CD4-positive, alpha-beta memory T cell (primary cell): ENCODE measurements at regions of chr7 and their contacts with region 1.

Region 1: GRCh38 chr7:39633563-39634477 is 10.4 kb downstream of the RALA start:
- DNase-seq: peak; percentile 43 to 73 (median 58)
- H3K4me3 ChIP-seq: peak overlapping the region in 1 of 2 donors; percentile 8
- H3K4me3 Mint-ChIP-seq: peak overlapping the region; percentile 56 to 85 (median 76)
- H3K27ac ChIP-seq: peak overlapping the region; percentile 52
- H3K27ac Mint-ChIP-seq: peak overlapping the region; percentile 90 to 99 (median 96)
- H3K4me1 ChIP-seq: peaks cover 56% of the 10 kb centered on the region
- H3K4me1 Mint-ChIP-seq: peaks cover 57 to 77% (median 66%) of the 10 kb centered on the region in 4 donors
- H3K27me3 ChIP-seq: no peaks in the 10 kb centered on the region
- H3K27me3 Mint-ChIP-seq: no peaks in the 10 kb centered on the region

Region 2: GRCh38 chr7:39650676-39651075 is 16.9 kb after region 1 on chr7:
- CTCF ChIA-PET with region 1: no interaction called
- POLR2A ChIA-PET with region 1: no interaction called
- intact Hi-C with region 1: loop called (anchors 2 kb)
- DNase-seq: no peak
- H3K4me3 ChIP-seq: no peak overlapping the region
- H3K4me3 Mint-ChIP-seq: no peak overlapping the region
- H3K27ac ChIP-seq: no peak overlapping the region
- H3K27ac Mint-ChIP-seq: no peak overlapping the region
- H3K4me1 ChIP-seq: no peaks in the 10 kb centered on the region
- H3K4me1 Mint-ChIP-seq: peaks cover 15 to 41% (median 25%) of the 10 kb centered on the region in 4 donors
- H3K27me3 ChIP-seq: no peaks in the 10 kb centered on the region
- H3K27me3 Mint-ChIP-seq: no peaks in the 10 kb centered on the region

Region 3: DNA sequence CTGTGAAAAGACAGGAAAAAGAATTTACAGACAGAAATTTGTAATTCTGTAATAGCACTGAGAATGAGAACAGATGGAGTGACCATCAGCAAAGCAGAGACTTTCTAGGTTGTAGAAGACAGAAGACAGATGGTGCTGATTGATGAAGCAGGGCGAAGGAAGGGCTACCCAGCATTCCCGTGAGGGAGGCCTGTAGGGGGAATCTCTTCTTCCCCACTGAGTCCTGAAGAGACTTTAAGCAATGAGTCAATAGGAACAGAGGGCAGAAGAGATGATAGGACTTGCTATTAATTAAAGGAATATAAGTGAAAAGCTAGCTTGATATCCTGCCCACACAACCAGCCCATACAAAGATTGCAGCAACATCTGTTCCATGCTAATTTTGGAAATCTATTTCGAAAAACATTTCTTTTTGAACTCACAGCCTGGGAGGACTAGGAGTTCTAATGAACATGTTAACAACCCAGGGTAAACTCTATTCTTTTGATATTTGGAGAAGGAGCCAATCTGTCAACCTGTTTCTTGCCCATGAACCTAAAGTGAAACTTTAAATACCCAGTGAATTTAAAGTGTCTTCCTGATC is 33.6 kb after region 1 on chr7:
- CTCF ChIA-PET with region 1: no interaction called
- POLR2A ChIA-PET with region 1: interaction called, 3 read pairs
- intact Hi-C with region 1: loop called (anchors 5 kb)
- DNase-seq: no peak
- H3K4me3 ChIP-seq: no peak overlapping the region
- H3K4me3 Mint-ChIP-seq: no peak overlapping the region
- H3K27ac ChIP-seq: no peak overlapping the region
- H3K27ac Mint-ChIP-seq: peak overlapping the region in 4 of 7 donors; percentile 14 to 65 (median 30)
- H3K4me1 ChIP-seq: no peaks in the 10 kb centered on the region
- H3K4me1 Mint-ChIP-seq: peaks cover 23 to 43% (median 27%) of the 10 kb centered on the region in 4 donors
- H3K27me3 ChIP-seq: no peaks in the 10 kb centered on the region
- H3K27me3 Mint-ChIP-seq: no peaks in the 10 kb centered on the region